Vagina (tissue), 2 donors: ENCODE measurements at regions of chr2 and their contacts with region 1.

Region 1: GRCh38 chr2:189363559-189363958 is 77.7 kb upstream of the WDR75 start:
- DNase-seq: no peak
- H3K4me3 ChIP-seq: no peak overlapping the region
- H3K27ac ChIP-seq: no peak overlapping the region
- H3K4me1 ChIP-seq: no peaks in the 10 kb centered on the region
- H3K27me3 ChIP-seq: no peaks in the 10 kb centered on the region
- CTCF ChIP-seq: no peak
- POLR2A ChIP-seq: no peak

Region 2: DNA sequence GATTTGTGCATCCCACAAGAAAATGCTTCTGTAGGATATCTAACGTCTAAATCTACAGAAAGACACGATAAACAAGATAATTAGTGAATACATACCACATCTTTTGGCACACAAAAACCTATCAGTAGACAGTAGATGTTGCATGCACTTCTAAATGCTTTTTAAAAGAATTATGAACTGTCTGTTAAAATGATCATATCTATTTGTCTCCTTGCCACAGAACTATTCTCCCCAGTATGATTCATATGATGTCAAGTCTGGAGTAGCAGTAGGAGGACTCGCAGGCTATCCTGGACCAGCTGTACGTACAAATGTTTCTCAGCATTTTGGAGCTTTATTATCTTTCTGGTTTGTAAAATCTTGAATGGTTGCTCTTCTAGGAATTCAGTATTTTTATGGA is 376.7 kb before region 1 on chr2:
- intact Hi-C with region 1: no loop called
- DNase-seq: no peak
- H3K4me3 ChIP-seq: no peak overlapping the region
- H3K27ac ChIP-seq: peak overlapping the region; percentile 91
- H3K4me1 ChIP-seq: peaks cover 27% of the 10 kb centered on the region
- H3K27me3 ChIP-seq: no peaks in the 10 kb centered on the region
- CTCF ChIP-seq: no peak
- POLR2A ChIP-seq: no peak

Region 3: DNA sequence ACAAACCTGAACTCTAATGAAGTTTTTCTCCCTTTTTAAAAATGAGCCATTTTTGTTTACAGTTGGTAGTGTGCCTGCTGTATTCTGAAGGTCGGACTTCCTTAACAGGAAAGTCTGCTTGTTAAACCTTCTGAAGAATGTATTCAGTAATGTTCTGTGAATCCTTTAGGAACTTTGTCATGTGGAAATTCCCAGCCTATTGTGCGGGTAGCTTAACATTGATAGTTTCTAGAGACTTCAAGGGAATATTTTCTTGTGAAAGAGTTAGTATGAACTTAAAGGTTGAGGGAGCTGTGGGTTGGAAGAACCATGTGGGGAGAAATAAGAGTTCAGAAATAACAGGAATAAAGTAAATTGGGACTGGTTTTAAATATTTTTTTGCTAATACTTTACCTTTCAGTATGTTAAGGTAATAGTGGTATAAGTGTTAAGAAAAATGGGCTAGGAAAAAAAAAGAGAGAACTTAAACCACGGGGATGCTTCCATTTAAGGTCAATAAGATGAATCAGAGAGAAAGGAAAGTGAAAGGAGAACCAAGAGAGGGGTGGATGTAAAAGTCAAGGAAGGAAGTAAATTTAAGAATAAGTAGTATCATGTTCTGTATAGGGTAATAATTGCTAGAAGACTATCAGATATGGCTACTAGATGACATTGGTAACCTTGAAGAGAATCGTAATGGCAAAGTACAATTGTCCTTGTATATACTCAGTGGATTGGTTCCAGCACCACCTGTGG is 511.2 kb after region 1 on chr2:
- intact Hi-C with region 1: loop called (anchors 10 kb)
- DNase-seq: no peak
- H3K4me3 ChIP-seq: no peak overlapping the region
- H3K27ac ChIP-seq: no peak overlapping the region
- H3K4me1 ChIP-seq: no peaks in the 10 kb centered on the region
- H3K27me3 ChIP-seq: no peaks in the 10 kb centered on the region
- CTCF ChIP-seq: no peak
- POLR2A ChIP-seq: no peak